PC-9 (cell line): ENCODE measurements at regions of chr3 and their contacts with region 1.

Region 1: GRCh38 chr3:29764603-29765254 is 483.9 kb downstream of the RBMS3 start:
- DNase-seq: peak; percentile 11 to 43
- H3K4me3 ChIP-seq: no peak overlapping the region
- H3K27ac ChIP-seq: no peak overlapping the region
- H3K4me1 ChIP-seq: no peaks in the 10 kb centered on the region
- H3K27me3 ChIP-seq: no peaks in the 10 kb centered on the region
- CTCF ChIP-seq: peak; percentile 62

Region 2: GRCh38 chr3:28667646-28668621 is 1096.8 kb before region 1 on chr3:
- CTCF ChIA-PET with region 1: interaction called, 3 read pairs
- POLR2A ChIA-PET with region 1: no interaction called
- intact Hi-C with region 1: loop called (anchors 5 kb)
- DNase-seq: peak in 1 of 2 experiments; percentile 53
- H3K4me3 ChIP-seq: no peak overlapping the region
- H3K27ac ChIP-seq: no peak overlapping the region
- H3K4me1 ChIP-seq: no peaks in the 10 kb centered on the region
- H3K27me3 ChIP-seq: no peaks in the 10 kb centered on the region; the same call in 1 of the 2 replicates
- CTCF ChIP-seq: peak; percentile 82

Region 3: GRCh38 chr3:28853830-28854229 is 910.9 kb before region 1 on chr3:
- CTCF ChIA-PET with region 1: no interaction called
- POLR2A ChIA-PET with region 1: interaction called, 14 read pairs
- intact Hi-C with region 1: no loop called
- DNase-seq: no peak
- H3K4me3 ChIP-seq: no peak overlapping the region
- H3K27ac ChIP-seq: no peak overlapping the region
- H3K4me1 ChIP-seq: no peaks in the 10 kb centered on the region
- H3K27me3 ChIP-seq: no peaks in the 10 kb centered on the region
- CTCF ChIP-seq: no peak

Region 4: DNA sequence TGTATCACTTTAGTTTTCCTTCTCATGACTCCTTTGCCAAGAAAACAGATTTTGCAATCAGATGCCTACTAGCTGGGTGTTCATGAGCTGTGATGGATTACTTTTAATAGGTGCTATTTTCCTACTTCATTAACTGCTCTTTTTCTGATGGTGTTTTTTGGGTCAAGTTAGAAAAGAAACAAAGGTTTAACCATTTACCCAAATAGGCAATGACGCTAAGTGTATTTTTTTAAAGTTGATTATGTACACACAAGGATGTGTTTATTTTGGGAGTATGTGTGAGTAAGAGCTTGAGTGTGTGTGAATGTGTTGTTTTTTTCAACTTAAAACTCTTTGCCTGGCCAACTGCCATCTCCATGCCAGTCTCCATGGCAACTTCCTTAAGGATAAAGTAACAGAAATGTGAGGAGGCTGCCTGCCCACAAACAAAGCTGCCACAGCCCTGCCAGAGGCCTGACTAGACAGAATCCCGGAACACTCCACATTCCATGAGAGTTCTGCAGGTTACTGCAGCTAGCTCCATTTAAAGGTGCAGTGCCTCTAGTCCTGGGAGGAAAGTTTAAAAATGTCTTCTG is 699.4 kb before region 1 on chr3:
- CTCF ChIA-PET with region 1: no interaction called
- POLR2A ChIA-PET with region 1: no interaction called
- intact Hi-C with region 1: loop called (anchors 10 kb)
- DNase-seq: peak; percentile 52 to 87
- H3K4me3 ChIP-seq: no peak overlapping the region
- H3K27ac ChIP-seq: no peak overlapping the region
- H3K4me1 ChIP-seq: no peaks in the 10 kb centered on the region
- H3K27me3 ChIP-seq: no peaks in the 10 kb centered on the region
- CTCF ChIP-seq: no peak

Region 5: GRCh38 chr3:29280404-29281093 is 484.2 kb before region 1 on chr3 and contains the start of gene RBMS3:
- CTCF ChIA-PET with region 1: no interaction called
- POLR2A ChIA-PET with region 1: no interaction called
- intact Hi-C with region 1: loop called (anchors 2 kb)
- DNase-seq: peak in 1 of 2 experiments; percentile 66
- H3K4me3 ChIP-seq: peak within 1 kb of the TSS; percentile 43; the same call in 1 of the 2 replicates
- H3K27ac ChIP-seq: no peak within 1 kb of the TSS
- H3K4me1 ChIP-seq: no peaks in the 10 kb centered on the region; the same call in 1 of the 2 replicates
- H3K27me3 ChIP-seq: no peaks in the 10 kb centered on the region
- CTCF ChIP-seq: peak; percentile 27; the same call in 1 of the 2 replicates
- total RNA-seq, gene RBMS3: 3.5 and 3.9 TPM in 2 replicates

Region 6: DNA sequence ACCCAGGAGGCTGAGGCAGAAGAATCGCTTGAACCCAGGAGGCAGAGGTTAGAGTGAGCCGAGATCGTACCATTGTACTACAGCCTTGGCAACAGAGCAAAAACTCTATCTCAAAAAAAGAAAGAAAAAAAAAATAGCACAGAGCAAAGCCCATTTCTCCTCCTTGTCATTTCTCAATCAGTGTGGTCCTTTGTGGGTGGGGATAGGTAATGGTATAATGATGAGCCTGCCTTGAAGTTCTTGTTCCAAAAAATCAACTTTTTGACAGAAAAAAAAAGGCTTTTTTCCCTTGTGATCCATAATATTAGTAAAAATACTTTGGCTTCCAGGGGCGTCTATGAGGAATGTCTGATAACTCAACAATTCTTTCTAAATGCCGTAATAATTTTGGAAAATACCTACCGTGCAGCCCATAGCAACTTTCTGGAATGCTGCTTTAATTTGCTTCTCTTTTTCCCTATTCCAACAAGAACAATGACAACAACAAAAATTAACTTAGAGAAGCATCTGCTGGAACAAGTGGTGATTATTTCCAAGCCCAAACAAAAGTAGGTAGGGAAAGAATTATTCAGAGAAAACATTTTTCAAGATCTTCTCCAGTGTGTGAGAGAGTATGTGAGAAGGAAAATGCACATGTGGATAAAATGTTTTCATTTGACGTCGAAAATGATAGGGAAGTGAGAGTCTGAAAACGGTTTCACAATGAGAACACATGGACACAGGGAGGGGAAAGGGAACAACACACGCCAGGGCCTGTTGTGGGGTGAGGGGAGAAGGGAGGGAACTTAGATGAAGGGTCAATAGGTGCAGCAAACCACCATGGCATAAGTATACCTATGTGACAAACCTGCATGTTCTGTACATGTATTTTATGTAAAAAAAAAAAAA is 146.1 kb before region 1 on chr3:
- CTCF ChIA-PET with region 1: no interaction called
- POLR2A ChIA-PET with region 1: no interaction called
- intact Hi-C with region 1: no loop called
- DNase-seq: no peak
- H3K4me3 ChIP-seq: no peak overlapping the region
- H3K27ac ChIP-seq: no peak overlapping the region
- H3K4me1 ChIP-seq: no peaks in the 10 kb centered on the region
- H3K27me3 ChIP-seq: no peaks in the 10 kb centered on the region
- CTCF ChIP-seq: no peak

Region 7: DNA sequence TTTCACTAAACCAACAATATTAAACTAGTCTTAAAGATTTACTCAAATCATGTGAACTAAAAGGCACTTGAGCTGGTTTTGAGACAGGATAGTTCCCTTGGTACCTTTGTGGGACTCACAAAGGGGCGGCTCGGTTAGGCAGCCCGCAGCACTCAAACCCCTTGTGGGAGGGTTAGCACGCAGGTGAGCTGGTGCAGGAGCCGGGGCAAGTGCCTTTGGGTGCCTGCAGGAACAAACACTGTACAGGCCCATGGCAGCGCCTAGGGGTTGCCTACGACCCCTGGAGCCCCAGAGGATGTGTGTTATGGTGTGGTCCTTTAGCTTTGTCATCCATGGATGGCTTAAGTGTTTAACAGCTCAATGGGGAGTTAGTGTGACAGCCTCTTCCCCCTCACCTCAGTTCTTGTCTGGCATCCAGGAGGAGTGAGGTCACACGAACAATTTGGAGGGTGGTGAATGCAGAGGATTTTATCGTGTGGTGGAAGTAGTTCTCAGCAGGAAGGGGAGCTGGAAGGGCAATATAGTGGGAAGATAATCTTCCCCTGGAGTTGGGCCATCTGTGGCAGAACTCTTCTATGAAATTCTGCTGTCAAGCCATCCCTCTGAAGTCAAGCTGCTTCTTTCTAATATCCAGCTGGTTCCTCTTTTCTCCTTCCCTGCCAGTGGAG is 12.9 kb before region 1 on chr3:
- CTCF ChIA-PET with region 1: no interaction called
- POLR2A ChIA-PET with region 1: no interaction called
- intact Hi-C with region 1: no loop called
- DNase-seq: no peak
- H3K4me3 ChIP-seq: no peak overlapping the region
- H3K27ac ChIP-seq: no peak overlapping the region
- H3K4me1 ChIP-seq: no peaks in the 10 kb centered on the region
- H3K27me3 ChIP-seq: no peaks in the 10 kb centered on the region
- CTCF ChIP-seq: no peak

Region 8: GRCh38 chr3:30810625-30811024 is 1045.9 kb after region 1 on chr3:
- CTCF ChIA-PET with region 1: no interaction called
- POLR2A ChIA-PET with region 1: no interaction called
- intact Hi-C with region 1: no loop called
- DNase-seq: no peak
- H3K4me3 ChIP-seq: no peak overlapping the region
- H3K27ac ChIP-seq: no peak overlapping the region
- H3K4me1 ChIP-seq: no peaks in the 10 kb centered on the region
- H3K27me3 ChIP-seq: no peaks in the 10 kb centered on the region
- CTCF ChIP-seq: no peak